ENCODE measurements at regions of chr13 and their contacts with region 1.

Region 1: DNA sequence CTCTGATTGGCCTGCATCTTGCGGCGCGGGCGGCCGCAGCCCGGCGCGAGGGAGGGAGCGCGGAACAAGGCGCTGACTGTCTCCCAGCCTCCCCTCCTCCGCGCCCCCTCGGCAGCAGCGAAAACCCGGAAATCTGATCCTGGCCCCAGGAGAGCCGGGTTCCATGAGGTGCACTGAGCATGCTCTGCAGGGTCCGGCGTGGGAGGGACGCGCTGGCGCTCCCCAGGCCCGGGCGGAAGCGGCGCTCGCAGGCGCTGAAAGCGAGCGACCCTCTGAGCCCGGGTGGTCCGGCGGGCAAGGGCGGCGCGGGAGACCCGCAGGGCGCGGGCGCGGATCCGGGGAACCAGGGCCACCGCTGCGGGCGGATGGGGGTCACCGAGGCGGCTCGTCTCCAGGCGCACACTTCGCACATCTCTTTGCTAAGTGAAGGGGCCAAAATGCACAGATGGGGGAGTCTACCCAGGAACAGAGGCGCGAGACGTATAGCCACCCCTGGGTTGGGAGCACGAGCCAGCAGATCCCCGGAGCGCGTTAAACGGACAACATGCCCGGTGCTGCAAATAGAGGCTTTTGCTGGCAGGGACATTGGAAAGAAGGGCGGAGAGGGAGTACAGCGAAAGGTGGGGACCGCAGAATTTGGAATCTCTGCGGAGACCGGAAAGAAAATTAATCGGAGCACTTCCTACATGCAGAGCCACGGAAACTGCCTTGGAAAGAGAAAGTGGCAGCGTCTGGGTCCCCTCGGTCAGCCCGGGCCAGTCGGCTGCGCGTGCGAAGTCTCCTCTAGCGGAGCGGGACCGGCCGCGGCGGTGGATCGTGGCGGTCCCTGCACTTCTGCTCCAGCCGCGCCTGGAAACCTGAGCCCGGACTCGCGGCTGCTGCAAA is 510 bp upstream of the PCDH9 start:
- DNase-seq: peak; percentile 96 to 97 (median 96)
- ATAC-seq: peak; percentile 96 to 99 (median 98)
- H3K4me3 ChIP-seq: peak overlapping the region; percentile 60 to 82 (median 78)
- H3K27ac ChIP-seq: peak overlapping the region; percentile 87 to 97 (median 93)
- H3K4me1 ChIP-seq: peaks cover 0 to 30% (median 5%) of the 10 kb centered on the region in 12 donors
- H3K27me3 ChIP-seq: peaks cover 0 to 10% (median 0%) of the 10 kb centered on the region in 9 donors
- CTCF ChIP-seq: no peak
- POLR2A ChIP-seq: peak in 1 of 2 donors; percentile 24

Region 2: DNA sequence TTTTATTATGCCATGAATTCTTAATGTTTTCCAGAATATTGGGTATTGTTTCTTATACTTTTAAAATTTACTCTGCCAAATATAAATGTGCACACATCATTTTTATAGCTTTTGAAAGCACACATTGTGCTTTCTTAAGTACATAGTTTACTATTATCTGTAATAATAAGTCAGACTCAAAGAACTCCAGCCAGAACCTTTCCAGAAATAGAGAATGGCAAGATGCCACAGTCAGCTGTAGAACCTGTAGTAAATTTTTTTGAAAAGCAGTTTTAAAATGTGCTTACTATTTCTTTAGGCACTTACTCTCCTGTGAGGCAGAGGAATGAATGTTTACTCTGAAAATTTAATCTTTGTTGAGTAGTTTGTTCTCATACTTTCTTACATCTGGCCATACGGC is 1287.6 kb before region 1 on chr13:
- intact Hi-C with region 1: loop called in 2 of 10 experiments (anchors 5 to 10 kb)
- DNase-seq: no peak
- ATAC-seq: peak in 1 of 4 donors; percentile 49
- H3K4me3 ChIP-seq: peak overlapping the region in 4 of 12 donors; percentile 20 to 44 (median 30)
- H3K27ac ChIP-seq: peak overlapping the region in 6 of 12 donors; percentile 2 to 33 (median 16)
- H3K4me1 ChIP-seq: peaks cover 0 to 13% (median 1%) of the 10 kb centered on the region in 12 donors
- H3K27me3 ChIP-seq: no peaks in the 10 kb centered on the region
- CTCF ChIP-seq: no peak
- POLR2A ChIP-seq: no peak

Region 3: DNA sequence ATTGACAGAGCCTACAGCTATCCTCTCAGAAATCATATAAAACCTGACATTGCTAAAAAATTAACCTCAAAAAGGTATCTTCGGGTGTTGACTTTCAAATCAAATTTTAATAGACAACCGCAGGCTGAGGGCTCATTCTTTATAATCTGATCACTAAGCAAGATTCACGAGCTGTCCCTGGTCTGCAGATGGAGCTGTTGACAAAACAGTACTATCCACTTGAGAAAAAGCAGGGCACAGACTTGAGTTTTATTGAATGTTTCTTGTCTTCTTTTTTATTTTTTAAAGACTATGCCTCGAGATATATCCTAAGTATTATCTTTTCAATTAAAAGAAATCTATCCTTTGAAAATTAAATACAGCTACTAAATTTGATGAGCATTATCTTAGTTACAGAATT is 541.0 kb before region 1 on chr13:
- intact Hi-C with region 1: loop called in 6 of 10 experiments (anchors 5 to 10 kb)
- DNase-seq: no peak
- ATAC-seq: peak in 1 of 4 donors; percentile 59
- H3K4me3 ChIP-seq: no peak overlapping the region
- H3K27ac ChIP-seq: no peak overlapping the region
- H3K4me1 ChIP-seq: peaks cover 0 to 7% (median 0%) of the 10 kb centered on the region in 12 donors
- H3K27me3 ChIP-seq: no peaks in the 10 kb centered on the region
- CTCF ChIP-seq: peak in 6 of 12 donors; percentile 33 to 55 (median 38)
- POLR2A ChIP-seq: no peak

Region 4: GRCh38 chr13:66994097-66994496 is 236.5 kb before region 1 on chr13:
- intact Hi-C with region 1: loop called in 2 of 10 experiments (anchors 5 to 10 kb)
- DNase-seq: peak; percentile 63 to 76 (median 68)
- ATAC-seq: peak; percentile 90 to 98 (median 96)
- H3K4me3 ChIP-seq: peak overlapping the region in 11 of 12 donors; percentile 7 to 58 (median 43)
- H3K27ac ChIP-seq: peak overlapping the region in 1 of 12 donors; percentile 42
- H3K4me1 ChIP-seq: peaks cover 0 to 7% (median 0%) of the 10 kb centered on the region in 12 donors
- H3K27me3 ChIP-seq: no peaks in the 10 kb centered on the region
- CTCF ChIP-seq: peak; percentile 20 to 70 (median 60)
- POLR2A ChIP-seq: no peak

Region 5: DNA sequence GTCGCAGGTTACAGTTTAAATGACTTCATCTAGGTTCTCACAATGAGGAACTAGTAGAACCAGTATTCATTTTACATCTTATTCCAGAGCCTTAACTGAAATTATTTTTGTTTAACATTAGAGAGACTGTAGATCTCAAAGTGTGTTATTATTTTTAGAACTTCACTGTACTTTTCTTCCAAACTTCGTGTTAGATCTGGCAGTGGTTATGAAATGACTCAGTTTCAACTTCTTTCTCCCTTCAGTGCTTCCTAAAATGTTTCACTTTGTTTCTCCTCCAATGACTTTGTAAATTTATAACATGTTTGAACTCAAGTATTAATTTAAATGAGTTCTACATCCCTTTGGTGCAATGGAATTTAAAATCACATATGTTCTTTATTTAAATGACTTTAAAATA is 139.8 kb before region 1 on chr13:
- intact Hi-C with region 1: loop called in 2 of 10 experiments (anchors 5 kb)
- DNase-seq: no peak
- ATAC-seq: no peak
- H3K4me3 ChIP-seq: no peak overlapping the region
- H3K27ac ChIP-seq: no peak overlapping the region
- H3K4me1 ChIP-seq: peaks cover 0 to 34% (median 4%) of the 10 kb centered on the region in 12 donors
- H3K27me3 ChIP-seq: no peaks in the 10 kb centered on the region
- CTCF ChIP-seq: no peak
- POLR2A ChIP-seq: no peak

Region 6: GRCh38 chr13:67147342-67148133 is 83.1 kb before region 1 on chr13:
- intact Hi-C with region 1: loop called in 1 of 10 experiments (anchors 5 kb)
- DNase-seq: peak in 1 of 5 donors; percentile 31
- ATAC-seq: peak; percentile 85 to 94 (median 90)
- H3K4me3 ChIP-seq: peak overlapping the region in 8 of 12 donors; percentile 2 to 40 (median 22)
- H3K27ac ChIP-seq: peak overlapping the region; percentile 27 to 91 (median 80)
- H3K4me1 ChIP-seq: peaks cover 0 to 49% (median 26%) of the 10 kb centered on the region in 12 donors
- H3K27me3 ChIP-seq: no peaks in the 10 kb centered on the region
- CTCF ChIP-seq: no peak
- POLR2A ChIP-seq: no peak

Region 7: DNA sequence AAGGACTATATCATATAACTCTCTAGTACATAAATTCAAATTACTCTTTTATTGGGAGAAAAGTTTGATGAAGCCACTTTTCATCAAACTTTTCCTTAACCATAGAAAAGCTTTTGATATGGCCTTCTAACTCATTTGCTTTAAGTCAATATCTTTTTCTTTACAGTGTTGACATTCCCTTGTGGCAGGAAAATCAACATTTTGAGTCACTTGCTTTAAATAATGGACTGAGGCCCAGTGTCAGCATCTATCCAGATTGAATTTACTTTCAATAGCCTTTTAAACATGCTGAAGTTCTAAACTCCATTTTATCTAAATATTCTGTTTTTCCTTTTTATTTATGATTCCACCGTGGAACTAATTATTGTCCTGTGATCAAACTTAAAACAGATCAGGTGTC is 63.2 kb before region 1 on chr13:
- intact Hi-C with region 1: no loop called
- DNase-seq: no peak
- ATAC-seq: no peak
- H3K4me3 ChIP-seq: no peak overlapping the region
- H3K27ac ChIP-seq: no peak overlapping the region
- H3K4me1 ChIP-seq: peaks cover 0 to 2% (median 0%) of the 10 kb centered on the region in 12 donors
- H3K27me3 ChIP-seq: no peaks in the 10 kb centered on the region
- CTCF ChIP-seq: no peak
- POLR2A ChIP-seq: no peak